HepG2 (cell line): ENCODE measurements at regions of chr6 and their contacts with region 1.

Region 1: GRCh38 chr6:150195996-150196417 is 53.2 kb downstream of the PPP1R14C start:
- DNase-seq: no peak
- ATAC-seq: no peak
- H3K4me3 ChIP-seq: no peak overlapping the region
- H3K27ac ChIP-seq: no peak overlapping the region
- H3K4me1 ChIP-seq: no peaks in the 10 kb centered on the region
- H3K27me3 ChIP-seq: peaks cover 0 to 7% of the 10 kb centered on the region in 2 experiments; a peak in 3 of 5 replicates
- CTCF ChIP-seq: no peak
- EP300 ChIP-seq: no peak
- POLR2A ChIP-seq: no peak
- RAD21 ChIP-seq: no peak

Region 2: DNA sequence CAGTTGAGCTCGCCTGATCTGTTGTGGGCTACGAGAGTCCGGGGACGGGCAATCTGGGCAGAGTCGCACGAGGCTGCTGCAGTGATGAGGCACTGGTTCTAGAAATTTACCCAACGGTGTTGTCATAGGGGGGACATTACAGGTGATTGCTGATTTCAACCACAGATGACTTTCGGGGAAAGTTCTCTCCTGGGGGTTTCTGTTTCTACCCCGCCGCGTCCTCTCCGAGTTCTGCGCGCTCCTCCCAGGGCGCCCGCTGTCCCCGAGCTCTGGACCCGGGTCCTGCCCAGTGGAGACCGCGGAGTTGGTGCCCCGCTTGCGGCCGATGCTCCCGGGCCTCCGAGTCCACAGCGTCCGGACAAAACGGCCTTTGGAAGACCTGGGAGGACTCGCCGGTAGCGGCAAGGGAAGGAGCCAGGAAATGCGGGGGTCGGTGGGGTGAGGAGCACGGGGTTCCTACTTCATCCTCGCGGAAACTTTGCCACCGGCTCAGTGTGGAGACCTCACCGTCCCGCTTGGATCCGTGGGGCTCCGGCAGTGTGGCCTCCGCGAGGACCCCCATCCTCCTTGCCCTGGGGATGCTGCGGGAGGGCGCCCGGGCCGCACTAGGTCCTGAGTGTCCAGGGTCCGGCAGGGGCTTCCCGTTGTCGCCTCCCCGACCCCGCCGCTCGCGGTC is 158.3 kb before region 1 on chr6:
- CTCF ChIA-PET with region 1: no interaction called
- POLR2A ChIA-PET with region 1: no interaction called
- in situ Hi-C with region 1: no loop called
- intact Hi-C with region 1: no loop called
- DNase-seq: no peak
- ATAC-seq: peak; percentile 48; the same call in 2 of the 3 replicates
- H3K4me3 ChIP-seq: no peak overlapping the region
- H3K27ac ChIP-seq: no peak overlapping the region
- H3K4me1 ChIP-seq: no peaks in the 10 kb centered on the region
- H3K27me3 ChIP-seq: peaks cover 9 to 55% of the 10 kb centered on the region in 2 experiments
- CTCF ChIP-seq: no peak
- EP300 ChIP-seq: no peak
- POLR2A ChIP-seq: no peak
- RAD21 ChIP-seq: no peak

Region 3: GRCh38 chr6:150091476-150091875 is 104.5 kb before region 1 on chr6:
- CTCF ChIA-PET with region 1: no interaction called
- POLR2A ChIA-PET with region 1: no interaction called
- in situ Hi-C with region 1: no loop called
- intact Hi-C with region 1: no loop called
- DNase-seq: no peak
- ATAC-seq: no peak
- H3K4me3 ChIP-seq: no peak overlapping the region
- H3K27ac ChIP-seq: no peak overlapping the region
- H3K4me1 ChIP-seq: no peaks in the 10 kb centered on the region
- H3K27me3 ChIP-seq: peaks cover 3 to 22% of the 10 kb centered on the region in 2 experiments; a peak in 4 of 5 replicates
- CTCF ChIP-seq: no peak
- EP300 ChIP-seq: no peak
- POLR2A ChIP-seq: no peak
- RAD21 ChIP-seq: no peak

Region 4: DNA sequence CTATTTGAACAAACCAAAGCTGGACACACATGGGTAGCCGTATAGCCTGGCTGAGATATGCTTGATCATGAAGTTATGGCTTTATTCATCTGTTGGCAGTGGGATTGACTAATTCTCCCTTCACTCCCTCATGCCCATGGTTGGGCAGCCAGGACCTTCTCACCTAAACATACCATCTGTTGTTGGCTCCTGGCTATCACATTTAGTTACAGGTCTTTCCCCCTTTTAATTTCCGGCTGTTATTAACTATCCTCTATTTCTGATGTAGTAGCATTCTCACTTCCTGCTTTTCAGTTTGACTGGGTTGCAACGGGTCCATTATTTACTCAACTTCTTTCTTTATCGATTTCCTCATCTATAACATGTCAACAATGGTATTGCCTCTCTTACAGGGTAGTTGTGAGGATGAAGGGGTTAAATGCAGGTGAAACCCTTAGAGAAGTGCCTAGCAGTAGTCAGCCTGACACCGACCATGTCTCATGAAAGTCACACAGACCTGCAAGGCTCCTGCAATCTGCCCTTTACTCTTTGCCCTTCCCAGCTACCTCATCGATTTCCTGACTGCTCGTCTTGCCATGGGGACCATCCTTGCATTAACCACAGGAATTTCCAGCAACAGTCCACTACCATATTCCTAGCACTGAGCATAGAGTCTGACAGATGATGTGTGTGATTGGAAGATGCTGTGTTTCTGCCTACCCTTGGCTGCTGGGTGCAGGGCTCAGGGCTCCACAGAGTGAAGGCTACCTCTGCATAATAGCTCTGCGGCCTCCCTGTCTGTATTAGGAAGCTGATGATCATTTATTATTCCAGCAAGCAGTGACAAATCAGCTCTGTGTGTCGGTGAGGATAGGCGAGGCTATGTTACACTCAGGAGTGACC is 10.9 kb before region 1 on chr6:
- CTCF ChIA-PET with region 1: no interaction called
- POLR2A ChIA-PET with region 1: no interaction called
- in situ Hi-C with region 1: no loop called
- intact Hi-C with region 1: loop called (anchors 1 kb)
- DNase-seq: no peak
- ATAC-seq: peak; percentile 47; the same call in 2 of the 3 replicates
- H3K4me3 ChIP-seq: no peak overlapping the region
- H3K27ac ChIP-seq: no peak overlapping the region
- H3K4me1 ChIP-seq: no peaks in the 10 kb centered on the region
- H3K27me3 ChIP-seq: no peaks in the 10 kb centered on the region; a peak in 1 of 5 replicates
- CTCF ChIP-seq: no peak
- EP300 ChIP-seq: no peak
- POLR2A ChIP-seq: no peak
- RAD21 ChIP-seq: no peak